ENCODE measurements at regions of chr10 and their contacts with region 1.

Region 1: GRCh38 chr10:27155066-27155754 is at the start of gene MASTL:
- DNase-seq: peak; percentile 87 to 98 (median 94)
- ATAC-seq: peak; percentile 82 to 90 (median 84)
- H3K4me3 ChIP-seq: peak within 1 kb of the TSS; percentile 65 to 100
- H3K4me3 Mint-ChIP-seq: peak within 1 kb of the TSS; percentile 96 to 100 (median 99)
- H3K27ac ChIP-seq: peak within 1 kb of the TSS; percentile 95
- H3K27ac Mint-ChIP-seq: peak within 1 kb of the TSS; percentile 100
- H3K4me1 ChIP-seq: peaks cover 12 to 39% of the 10 kb centered on the region in 2 experiments
- H3K4me1 Mint-ChIP-seq: peaks cover 49 to 65% (median 52%) of the 10 kb centered on the region in 3 donors
- H3K27me3 ChIP-seq: no peaks in the 10 kb centered on the region
- H3K27me3 Mint-ChIP-seq: no peaks in the 10 kb centered on the region
- total RNA-seq, gene MASTL: 4.2 to 21.2 (median 10.4) TPM

Region 2: DNA sequence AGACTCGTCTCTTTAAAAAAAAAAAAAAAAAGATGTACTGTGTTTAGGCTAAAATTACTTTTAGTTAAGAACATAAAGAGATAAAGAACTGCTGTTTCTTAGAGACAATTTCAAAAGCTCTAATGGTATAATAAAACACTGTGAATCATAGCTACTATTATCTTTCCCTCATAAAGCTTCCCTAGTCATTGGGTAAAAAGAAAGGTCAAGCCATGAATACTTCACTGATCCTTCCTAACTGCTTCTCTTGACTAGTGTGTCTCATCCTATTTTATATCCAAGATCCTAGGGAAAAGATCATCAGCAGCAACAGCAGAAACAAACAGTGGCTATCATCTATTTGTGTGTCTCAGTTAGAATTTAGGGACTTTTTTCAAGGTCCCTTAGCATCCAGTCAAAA is 11.5 kb before region 1 on chr10:
- CTCF ChIA-PET with region 1: interaction called in 1 of 2 experiments, 5 read pairs
- POLR2A ChIA-PET with region 1: interaction called, 3 to 10 read pairs
- DNase-seq: no peak
- ATAC-seq: no peak
- H3K4me3 ChIP-seq: no peak overlapping the region
- H3K4me3 Mint-ChIP-seq: no peak overlapping the region
- H3K27ac ChIP-seq: no peak overlapping the region
- H3K27ac Mint-ChIP-seq: peak overlapping the region in 1 of 2 donors; percentile 8
- H3K4me1 ChIP-seq: peaks cover 0 to 4% of the 10 kb centered on the region in 2 experiments
- H3K4me1 Mint-ChIP-seq: peaks cover 16 to 19% (median 16%) of the 10 kb centered on the region in 3 donors
- H3K27me3 ChIP-seq: no peaks in the 10 kb centered on the region
- H3K27me3 Mint-ChIP-seq: no peaks in the 10 kb centered on the region

Region 3: GRCh38 chr10:27513451-27514191 is 358.4 kb after region 1 on chr10:
- CTCF ChIA-PET with region 1: no interaction called
- POLR2A ChIA-PET with region 1: no interaction called
- DNase-seq: peak in 2 of 35 experiments; percentile 8 to 22
- ATAC-seq: peak; percentile 73 to 88 (median 82)
- H3K4me3 ChIP-seq: no peak overlapping the region
- H3K4me3 Mint-ChIP-seq: peak overlapping the region; percentile 10 to 65 (median 26)
- H3K27ac ChIP-seq: no peak overlapping the region
- H3K27ac Mint-ChIP-seq: peak overlapping the region; percentile 71 to 85
- H3K4me1 ChIP-seq: peaks cover 20 to 33% of the 10 kb centered on the region in 2 experiments
- H3K4me1 Mint-ChIP-seq: peaks cover 78 to 87% (median 80%) of the 10 kb centered on the region in 3 donors
- H3K27me3 ChIP-seq: no peaks in the 10 kb centered on the region
- H3K27me3 Mint-ChIP-seq: no peaks in the 10 kb centered on the region